B cell (primary cell): ENCODE measurements at regions of chr12 and their contacts with region 1.

Region 1: GRCh38 chr12:89882050-89882449 is 173.4 kb upstream of the ATP2B1 start:
- DNase-seq: peak; percentile 58
- ATAC-seq: peak; percentile 22
- H3K4me3 ChIP-seq: peak overlapping the region in 1 of 5 experiments; percentile 3
- H3K4me3 Mint-ChIP-seq: peak overlapping the region; percentile 89
- H3K27ac ChIP-seq: peak overlapping the region; percentile 94 to 95
- H3K27ac Mint-ChIP-seq: peak overlapping the region; percentile 99
- H3K4me1 ChIP-seq: peaks cover 45 to 52% of the 10 kb centered on the region in 2 donors
- H3K4me1 Mint-ChIP-seq: peaks cover 52% of the 10 kb centered on the region
- H3K27me3 ChIP-seq: no peaks in the 10 kb centered on the region
- H3K27me3 Mint-ChIP-seq: no peaks in the 10 kb centered on the region
- CTCF ChIP-seq: no peak

Region 2: DNA sequence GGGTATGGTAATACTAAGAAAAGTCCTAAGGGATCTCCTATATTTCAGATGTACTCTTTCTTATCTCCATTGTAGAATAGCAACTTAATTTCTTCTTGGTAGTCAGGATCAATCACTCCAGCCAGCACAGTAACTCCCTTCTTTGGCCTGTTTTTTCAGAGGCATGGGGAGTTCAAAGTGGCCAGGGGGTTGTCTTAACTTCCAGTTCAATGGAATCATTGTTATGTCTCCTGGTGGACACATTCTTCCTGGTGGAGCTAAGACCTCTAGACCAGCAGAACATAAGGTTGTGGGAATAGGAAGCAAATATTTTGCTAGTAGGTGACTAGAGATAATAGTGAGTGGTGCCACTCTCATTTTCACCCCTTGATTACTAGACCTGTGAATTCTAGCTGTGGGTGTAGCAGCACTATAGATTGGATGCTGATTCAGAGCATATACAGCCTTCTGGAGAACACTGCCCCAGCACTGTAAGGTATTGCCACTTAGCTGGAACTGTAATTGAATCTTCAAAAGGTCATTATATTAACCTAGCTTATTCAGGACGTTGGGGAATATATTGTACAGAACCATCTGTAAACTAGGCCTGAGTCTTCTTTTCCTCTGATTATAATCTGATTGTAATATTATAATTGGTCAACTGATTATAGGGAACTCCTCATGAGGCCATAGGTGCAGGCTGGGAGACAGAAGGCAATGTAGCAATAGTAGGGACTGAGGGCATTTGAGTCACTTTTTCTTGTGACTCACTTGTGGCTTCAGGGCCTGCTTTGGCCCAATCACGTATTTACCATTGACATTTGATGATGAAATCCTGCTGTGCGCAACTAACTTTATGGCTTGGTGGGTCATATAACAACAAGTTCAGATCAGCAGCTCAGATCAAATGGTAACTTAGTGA is 113.2 kb before region 1 on chr12:
- CTCF ChIA-PET with region 1: no interaction called
- POLR2A ChIA-PET with region 1: no interaction called
- intact Hi-C with region 1: no loop called
- DNase-seq: no peak
- ATAC-seq: no peak
- H3K4me3 ChIP-seq: no peak overlapping the region
- H3K4me3 Mint-ChIP-seq: no peak overlapping the region
- H3K27ac ChIP-seq: no peak overlapping the region
- H3K27ac Mint-ChIP-seq: no peak overlapping the region
- H3K4me1 ChIP-seq: peaks cover 12% of the 10 kb centered on the region in 2 donors
- H3K4me1 Mint-ChIP-seq: peaks cover 22% of the 10 kb centered on the region
- H3K27me3 ChIP-seq: no peaks in the 10 kb centered on the region
- H3K27me3 Mint-ChIP-seq: no peaks in the 10 kb centered on the region
- CTCF ChIP-seq: no peak

Region 3: GRCh38 chr12:89862511-89863179 is 19.4 kb before region 1 on chr12:
- CTCF ChIA-PET with region 1: interaction called, 8 read pairs
- POLR2A ChIA-PET with region 1: interaction called, 10 read pairs
- intact Hi-C with region 1: loop called (anchors 1 kb)
- DNase-seq: peak; percentile 88
- ATAC-seq: peak; percentile 68
- H3K4me3 ChIP-seq: peak overlapping the region; percentile 23 to 65 (median 44)
- H3K4me3 Mint-ChIP-seq: peak overlapping the region; percentile 86
- H3K27ac ChIP-seq: peak overlapping the region; percentile 92 to 96
- H3K27ac Mint-ChIP-seq: peak overlapping the region; percentile 98
- H3K4me1 ChIP-seq: peaks cover 58 to 65% of the 10 kb centered on the region in 2 donors
- H3K4me1 Mint-ChIP-seq: peaks cover 68% of the 10 kb centered on the region
- H3K27me3 ChIP-seq: no peaks in the 10 kb centered on the region
- H3K27me3 Mint-ChIP-seq: no peaks in the 10 kb centered on the region
- CTCF ChIP-seq: no peak

Region 4: DNA sequence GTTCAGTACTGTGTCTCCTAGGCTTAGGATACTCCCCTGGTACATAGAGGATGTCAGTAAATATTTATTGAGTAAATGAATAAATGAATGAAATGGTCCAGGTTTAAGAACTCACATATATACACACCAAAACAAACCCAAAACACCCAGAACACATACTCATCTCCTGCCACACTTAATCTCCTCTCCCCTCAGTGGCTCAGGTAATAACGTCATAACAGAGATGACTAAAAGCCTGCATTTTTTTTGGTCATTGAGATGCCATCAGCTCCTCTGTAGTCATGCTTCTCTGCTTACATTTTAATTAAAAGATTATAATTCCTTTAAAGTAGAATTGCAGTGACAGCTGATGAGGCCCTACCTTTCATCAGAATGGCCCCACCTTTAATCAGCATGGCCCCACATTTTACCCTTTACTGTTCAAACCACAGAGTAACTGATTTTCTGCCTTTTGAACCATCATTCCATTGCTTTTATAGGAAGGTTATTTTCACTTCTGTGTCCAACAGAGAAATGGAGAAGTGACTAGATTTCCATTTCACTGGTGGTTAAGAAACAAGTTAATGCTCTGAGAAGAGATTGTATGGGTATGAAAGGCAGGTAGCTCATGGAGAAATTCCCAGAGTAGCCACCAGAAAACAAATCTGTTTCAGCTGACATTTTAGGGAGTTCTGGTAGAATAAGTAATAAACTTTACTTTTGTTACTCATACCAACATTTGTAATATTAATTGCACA is 20.0 kb after region 1 on chr12:
- CTCF ChIA-PET with region 1: interaction called, 4 read pairs
- POLR2A ChIA-PET with region 1: no interaction called
- intact Hi-C with region 1: loop called (anchors 2 kb)
- DNase-seq: no peak
- ATAC-seq: no peak
- H3K4me3 ChIP-seq: no peak overlapping the region
- H3K4me3 Mint-ChIP-seq: no peak overlapping the region
- H3K27ac ChIP-seq: no peak overlapping the region
- H3K27ac Mint-ChIP-seq: no peak overlapping the region
- H3K4me1 ChIP-seq: peaks cover 4 to 8% of the 10 kb centered on the region in 2 donors
- H3K4me1 Mint-ChIP-seq: peaks cover 11% of the 10 kb centered on the region
- H3K27me3 ChIP-seq: no peaks in the 10 kb centered on the region
- H3K27me3 Mint-ChIP-seq: no peaks in the 10 kb centered on the region
- CTCF ChIP-seq: no peak